Mammary epithelial cell (primary cell): ENCODE measurements at regions of chr19 and their contacts with region 1.

Region 1: GRCh38 chr19:13887517-13887916 is 10.6 kb downstream of the NANOS3 start:
- DNase-seq: peak; percentile 83
- H3K4me3 ChIP-seq: no peak overlapping the region
- H3K27ac ChIP-seq: no peak overlapping the region
- H3K4me1 ChIP-seq: peaks cover 39% of the 10 kb centered on the region
- H3K27me3 ChIP-seq: no peaks in the 10 kb centered on the region
- CTCF ChIP-seq: no peak

Region 2: DNA sequence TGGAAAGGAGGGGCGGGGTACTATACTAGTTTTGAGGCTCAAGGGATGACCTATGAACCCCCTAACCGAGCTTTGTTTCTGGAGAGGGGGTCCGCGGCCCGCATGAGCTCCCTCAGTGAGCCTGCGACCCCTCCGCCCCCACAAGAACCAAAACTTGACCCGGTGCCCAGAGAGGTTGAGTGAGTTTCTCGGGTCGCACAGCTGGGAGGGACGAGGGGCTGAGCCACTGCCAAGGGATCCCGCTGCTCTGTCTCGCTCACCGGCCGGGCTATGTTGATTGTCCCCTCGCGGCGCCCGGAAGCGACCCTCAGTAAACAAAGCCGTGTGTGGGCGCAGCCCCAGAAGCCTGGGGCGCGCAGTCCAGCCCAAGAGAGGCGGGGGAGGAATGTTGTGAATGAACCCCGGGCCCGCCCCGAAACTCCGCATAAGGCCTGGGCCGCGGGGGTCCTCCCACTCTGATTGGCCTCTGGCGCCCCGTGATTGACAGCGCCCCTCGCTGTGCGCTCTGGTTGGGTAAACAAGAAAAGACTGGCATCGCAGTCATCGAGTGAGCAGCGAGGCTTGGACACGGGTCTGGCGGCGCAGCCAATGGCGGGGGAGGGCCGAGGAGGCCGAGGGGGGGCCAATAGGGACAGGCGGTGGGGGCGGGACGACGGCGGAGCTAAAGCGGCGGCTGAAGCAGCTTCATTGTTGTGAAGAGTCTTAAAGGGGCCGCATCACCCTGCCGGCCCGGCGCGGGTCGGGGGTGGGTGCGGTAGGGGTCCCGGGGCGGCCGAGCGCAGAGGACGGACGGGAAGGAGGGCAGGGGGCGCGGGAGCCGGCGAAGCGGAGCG is 92.5 kb before region 1 on chr19 and contains the start of gene ZSWIM4:
- CTCF ChIA-PET with region 1: no interaction called
- dilution Hi-C with region 1: loop called (anchors 5 kb)
- in situ Hi-C with region 1: no loop called
- intact Hi-C with region 1: no loop called
- DNase-seq: peak; percentile 100
- H3K4me3 ChIP-seq: peak within 1 kb of the TSS; percentile 79 to 87 (median 79)
- H3K27ac ChIP-seq: peak within 1 kb of the TSS; percentile 96
- H3K4me1 ChIP-seq: peaks cover 23% of the 10 kb centered on the region
- H3K27me3 ChIP-seq: no peaks in the 10 kb centered on the region
- CTCF ChIP-seq: no peak
- total RNA-seq, gene ZSWIM4: 3.2 to 5.4 TPM

Region 3: GRCh38 chr19:13952154-13953035 is 64.9 kb after region 1 on chr19 and contains the start of gene DCAF15:
- CTCF ChIA-PET with region 1: no interaction called
- dilution Hi-C with region 1: loop called (anchors 5 kb)
- in situ Hi-C with region 1: no loop called
- intact Hi-C with region 1: no loop called
- DNase-seq: peak; percentile 99
- H3K4me3 ChIP-seq: peak within 1 kb of the TSS; percentile 83 to 86 (median 84)
- H3K27ac ChIP-seq: peak within 1 kb of the TSS; percentile 30
- H3K4me1 ChIP-seq: peaks cover 11% of the 10 kb centered on the region
- H3K27me3 ChIP-seq: no peaks in the 10 kb centered on the region
- CTCF ChIP-seq: no peak
- total RNA-seq, gene DCAF15: 15.2 to 31.3 TPM

Region 4: GRCh38 chr19:13962699-13963602 is 75.4 kb after region 1 on chr19:
- CTCF ChIA-PET with region 1: no interaction called
- dilution Hi-C with region 1: no loop called
- in situ Hi-C with region 1: no loop called
- intact Hi-C with region 1: no loop called
- DNase-seq: no peak
- H3K4me3 ChIP-seq: no peak overlapping the region
- H3K27ac ChIP-seq: no peak overlapping the region
- H3K4me1 ChIP-seq: no peaks in the 10 kb centered on the region
- H3K27me3 ChIP-seq: no peaks in the 10 kb centered on the region
- CTCF ChIP-seq: no peak

Region 5: GRCh38 chr19:14023404-14024235 is 136.1 kb after region 1 on chr19:
- CTCF ChIA-PET with region 1: no interaction called
- dilution Hi-C with region 1: loop called (anchors 5 kb)
- in situ Hi-C with region 1: no loop called
- intact Hi-C with region 1: no loop called
- DNase-seq: peak; percentile 34
- H3K4me3 ChIP-seq: no peak overlapping the region
- H3K27ac ChIP-seq: no peak overlapping the region
- H3K4me1 ChIP-seq: no peaks in the 10 kb centered on the region
- H3K27me3 ChIP-seq: no peaks in the 10 kb centered on the region
- CTCF ChIP-seq: peak; percentile 50 to 51

Region 6: DNA sequence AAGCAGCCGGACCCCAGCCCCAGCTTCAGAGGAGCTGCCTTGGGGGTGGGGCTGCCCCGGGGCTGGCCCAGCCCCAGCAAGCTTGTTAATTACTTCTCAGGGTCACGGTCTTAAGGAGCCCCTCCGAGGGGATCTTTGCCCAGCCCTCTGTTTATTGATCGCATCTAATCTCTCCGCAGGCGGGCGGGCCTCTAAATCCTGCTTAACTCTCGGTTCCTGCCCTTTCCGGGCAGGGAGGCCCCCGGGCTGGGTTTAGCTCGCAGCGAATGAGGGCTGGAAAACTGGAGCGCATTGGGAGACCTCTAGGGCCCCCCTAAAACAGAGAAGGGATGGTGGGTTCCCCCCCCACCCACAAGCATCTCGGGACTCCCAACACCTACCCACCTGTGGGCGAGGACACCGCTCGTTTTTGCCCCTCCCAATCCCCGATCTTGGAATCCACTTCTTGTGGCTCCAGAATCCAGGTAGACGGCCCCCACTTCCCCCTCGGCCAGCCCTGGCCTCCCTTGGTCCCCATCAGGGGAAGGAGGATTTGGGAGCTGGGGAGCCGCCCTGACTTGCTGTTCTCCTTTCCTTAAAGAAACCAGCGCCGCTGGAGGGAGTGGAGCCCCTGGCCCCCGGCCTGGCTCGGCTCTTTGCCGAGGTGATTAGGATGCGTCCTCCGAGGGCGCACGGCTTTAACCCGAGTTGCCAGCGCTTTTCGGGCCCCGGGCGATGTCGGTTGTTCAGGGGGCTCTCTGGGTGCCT is 377.9 kb after region 1 on chr19:
- CTCF ChIA-PET with region 1: no interaction called
- dilution Hi-C with region 1: loop called (anchors 5 kb)
- in situ Hi-C with region 1: no loop called
- intact Hi-C with region 1: no loop called
- DNase-seq: no peak
- H3K4me3 ChIP-seq: no peak overlapping the region
- H3K27ac ChIP-seq: no peak overlapping the region
- H3K4me1 ChIP-seq: no peaks in the 10 kb centered on the region
- H3K27me3 ChIP-seq: peaks cover 4% of the 10 kb centered on the region
- CTCF ChIP-seq: no peak